Lower leg skin (tissue), 4 donors: ENCODE measurements at regions of chr1 and their contacts with region 1.

Region 1: GRCh38 chr1:72745413-72745812 is 463.1 kb upstream of the NEGR1 start:
- DNase-seq: no peak
- H3K4me3 ChIP-seq: no peak overlapping the region
- CTCF ChIP-seq: no peak
- POLR2A ChIP-seq: no peak

Region 2: GRCh38 chr1:71834601-71835441 is 910.6 kb before region 1 on chr1:
- intact Hi-C with region 1: loop called (anchors 5 kb)
- DNase-seq: no peak
- H3K4me3 ChIP-seq: no peak overlapping the region
- CTCF ChIP-seq: no peak
- POLR2A ChIP-seq: no peak